ENCODE measurements at regions of chr9 and their contacts with region 1.

Region 1: GRCh38 chr9:112971415-112971814 is 40.6 kb downstream of the ZNF883 start:
- ATAC-seq: peak in 3 of 8 experiments; percentile 27 to 66 (median 47)
- H3K4me3 ChIP-seq: no peak overlapping the region
- H3K27ac ChIP-seq: no peak overlapping the region
- H3K4me1 ChIP-seq: no peaks in the 10 kb centered on the region

Region 2: DNA sequence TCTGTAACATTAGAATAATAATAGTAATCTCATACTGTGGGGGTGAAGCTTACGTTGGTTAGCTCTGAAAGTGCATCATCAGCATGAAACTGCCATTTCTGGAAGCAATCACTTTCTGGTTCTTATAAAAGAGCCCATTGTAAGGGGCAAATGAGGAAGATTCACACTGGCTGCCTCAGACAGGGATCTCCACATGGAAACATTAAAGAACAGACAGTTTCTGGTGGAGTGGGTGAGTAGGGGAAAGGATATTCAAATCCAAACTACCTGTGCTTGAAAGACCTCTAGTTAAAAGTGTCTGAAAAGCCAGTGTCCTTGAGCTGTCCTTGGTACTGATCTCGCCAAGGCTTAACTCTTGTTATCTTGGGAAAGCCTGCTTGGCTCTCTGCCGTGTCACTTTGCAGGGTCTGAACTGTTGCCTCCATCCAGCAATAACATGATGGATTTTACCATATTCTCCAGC is 160.3 kb after region 1 on chr9:
- in situ Hi-C with region 1: loop called in 1 of 9 experiments (anchors 25 kb)
- ATAC-seq: no peak
- H3K4me3 ChIP-seq: no peak overlapping the region
- H3K27ac ChIP-seq: no peak overlapping the region
- H3K4me1 ChIP-seq: no peaks in the 10 kb centered on the region